Lower leg skin (tissue), 4 donors: ENCODE measurements at regions of chr5 and their contacts with region 1.

Region 1: DNA sequence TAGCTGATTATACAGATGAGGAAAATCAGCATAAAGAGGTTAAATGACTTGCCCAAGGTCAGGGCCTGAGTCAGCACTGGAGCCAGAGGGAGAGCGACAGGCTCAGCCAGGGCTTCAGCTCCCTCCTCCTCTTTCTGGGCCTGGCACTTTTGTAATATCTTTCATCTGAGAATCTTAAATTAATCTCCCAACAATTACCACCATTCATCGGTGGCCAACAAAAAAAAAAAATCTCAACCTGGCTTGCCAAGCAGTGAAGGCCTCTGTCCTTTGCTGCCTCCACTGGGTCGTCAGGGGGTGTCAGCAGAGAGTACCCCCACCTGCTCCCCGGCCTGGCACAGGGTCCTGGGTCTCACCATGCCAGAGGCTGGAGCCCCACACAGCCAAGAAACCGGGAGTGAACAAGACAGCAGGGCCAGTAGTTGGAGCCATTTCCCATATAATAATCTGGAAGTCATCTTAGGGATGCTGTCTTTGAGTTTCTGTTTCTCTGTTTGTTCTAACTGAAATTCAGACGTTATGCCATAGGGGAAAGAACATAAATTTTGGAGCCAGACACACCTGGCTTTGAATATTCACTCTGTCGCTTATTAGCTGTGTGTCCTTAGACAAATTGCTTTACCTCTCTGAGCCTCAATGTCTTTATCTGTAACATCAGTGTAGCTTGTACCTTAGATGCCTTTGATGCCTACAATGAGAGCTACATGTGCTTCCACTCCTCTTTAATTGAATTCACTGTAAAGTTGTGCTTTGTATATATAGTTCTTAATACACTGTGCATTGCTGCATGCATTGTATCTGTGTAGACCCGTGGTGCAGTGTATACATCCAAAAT is 299.9 kb upstream of the MSX2 start:
- DNase-seq: no peak
- H3K4me3 ChIP-seq: no peak overlapping the region
- CTCF ChIP-seq: no peak
- POLR2A ChIP-seq: no peak

Region 2: DNA sequence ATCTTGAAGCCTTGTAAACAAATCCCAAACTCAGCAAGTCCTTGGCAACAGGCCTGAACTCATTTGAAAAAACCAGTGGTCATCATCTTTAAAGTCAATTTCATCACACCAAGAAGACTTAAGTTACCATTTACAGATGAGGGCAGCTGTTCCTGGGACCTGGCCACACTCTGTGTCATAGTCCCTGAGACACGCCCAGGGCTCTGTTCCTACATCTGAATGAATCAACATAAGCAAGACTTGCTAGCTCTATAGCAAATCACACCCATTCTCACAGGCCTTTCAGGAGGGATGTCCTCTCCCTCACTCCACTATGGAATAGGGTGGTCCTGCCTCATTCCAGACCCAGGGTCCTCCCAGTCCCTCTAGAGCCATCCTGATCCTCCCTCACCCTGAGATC is 236.1 kb before region 1 on chr5:
- intact Hi-C with region 1: no loop called
- DNase-seq: peak in 1 of 2 donors; percentile 49
- H3K4me3 ChIP-seq: no peak overlapping the region
- CTCF ChIP-seq: no peak
- POLR2A ChIP-seq: no peak

Region 3: GRCh38 chr5:174720612-174721451 is 296.4 kb after region 1 on chr5:
- intact Hi-C with region 1: no loop called
- DNase-seq: no peak
- H3K4me3 ChIP-seq: no peak overlapping the region
- CTCF ChIP-seq: no peak
- POLR2A ChIP-seq: no peak

Region 4: GRCh38 chr5:174735498-174736330 is 311.3 kb after region 1 on chr5:
- intact Hi-C with region 1: loop called (anchors 5 kb)
- DNase-seq: no peak
- H3K4me3 ChIP-seq: no peak overlapping the region
- CTCF ChIP-seq: no peak
- POLR2A ChIP-seq: no peak

Region 5: DNA sequence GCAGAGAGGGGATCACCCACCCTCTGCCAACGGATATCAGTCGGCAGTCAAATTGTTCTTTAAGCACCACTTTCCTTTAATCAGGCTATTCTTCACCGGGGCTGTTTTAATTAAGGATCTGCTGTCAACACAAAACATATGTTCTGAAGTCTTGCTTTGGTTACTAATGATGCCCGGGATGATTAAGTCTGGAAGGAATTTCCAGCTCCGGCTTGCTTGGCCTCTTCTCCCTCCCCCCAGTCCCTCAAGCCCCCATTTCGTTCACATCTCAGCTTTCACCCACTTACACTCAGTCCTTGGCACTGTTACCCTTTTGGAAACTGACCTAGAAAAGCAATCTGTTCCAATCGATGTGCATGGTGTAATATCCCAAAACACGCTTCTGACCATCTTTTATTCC is 374.7 kb after region 1 on chr5:
- intact Hi-C with region 1: loop called (anchors 5 kb)
- DNase-seq: peak in 1 of 2 donors; percentile 32
- H3K4me3 ChIP-seq: no peak overlapping the region
- CTCF ChIP-seq: no peak
- POLR2A ChIP-seq: no peak